Naive thymus-derived CD8-positive, alpha-beta T cell (primary cell): ENCODE measurements at regions of chr11 and their contacts with region 1.

Region 1: GRCh38 chr11:130002846-130003716 is 446 bp upstream of the PRDM10 start:
- DNase-seq: peak in 9 of 10 donors; percentile 74 to 97 (median 90)
- ATAC-seq: peak; percentile 75 to 81
- H3K4me3 Mint-ChIP-seq: peak overlapping the region; percentile 94 to 100 (median 99)
- H3K27ac Mint-ChIP-seq: peak overlapping the region; percentile 99 to 100 (median 100)
- H3K4me1 Mint-ChIP-seq: peaks cover 11 to 49% (median 36%) of the 10 kb centered on the region in 4 donors
- H3K27me3 Mint-ChIP-seq: peaks cover 0 to 2% (median 0%) of the 10 kb centered on the region in 5 donors

Region 2: DNA sequence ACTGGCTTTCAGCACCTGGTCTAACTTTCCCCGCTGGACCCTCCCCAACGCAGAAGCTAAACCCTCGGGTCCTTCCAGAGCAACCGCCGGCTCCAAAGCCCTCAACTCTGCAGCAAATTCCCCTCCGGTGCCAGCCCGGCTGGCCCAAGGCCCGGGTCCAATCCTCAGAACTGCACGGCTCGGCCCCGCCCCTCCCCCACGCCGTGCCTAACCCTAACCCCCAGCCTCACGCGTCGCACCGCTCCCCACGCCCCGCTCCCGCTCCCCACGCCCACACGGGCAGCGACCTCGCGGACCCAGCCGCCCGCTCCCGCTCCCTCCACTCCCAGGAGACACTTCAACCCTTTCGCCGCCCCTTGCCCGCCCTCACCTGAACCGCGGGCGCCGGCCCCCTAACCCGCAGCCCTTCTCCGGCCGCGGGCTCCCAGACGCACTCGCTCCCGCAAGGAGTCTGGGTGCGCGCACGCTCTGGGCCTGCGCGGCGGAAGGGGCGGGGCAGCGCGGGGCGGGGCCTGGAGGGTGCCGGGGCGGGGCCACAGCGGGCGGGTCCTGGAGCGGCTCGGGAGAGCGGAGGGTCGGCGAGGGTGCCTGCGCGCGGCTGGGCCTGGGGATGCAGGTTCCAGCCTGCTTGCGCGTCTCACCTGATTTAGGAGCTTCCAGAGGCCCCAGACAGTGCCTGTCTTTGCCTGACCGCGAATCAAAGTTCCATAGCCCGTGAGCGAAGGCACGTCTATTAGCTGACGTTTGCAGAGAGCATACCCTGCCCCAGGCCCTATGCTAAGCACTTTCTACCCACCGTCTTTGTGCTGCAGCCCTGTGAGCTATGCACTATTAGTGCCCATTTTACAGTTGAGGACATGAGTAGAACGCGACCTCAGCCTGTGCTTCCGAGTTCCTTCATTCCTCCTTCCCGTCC is 107.7 kb before region 1 on chr11 and contains the start of gene NFRKB:
- POLR2A ChIA-PET with region 1: interaction called, 18 read pairs
- DNase-seq: peak; percentile 67 to 92 (median 87)
- ATAC-seq: peak; percentile 93 to 94
- H3K4me3 Mint-ChIP-seq: peak within 1 kb of the TSS; percentile 82 to 94 (median 92)
- H3K27ac Mint-ChIP-seq: peak within 1 kb of the TSS; percentile 76 to 94 (median 90)
- H3K4me1 Mint-ChIP-seq: peaks cover 24 to 43% (median 38%) of the 10 kb centered on the region in 4 donors
- H3K27me3 Mint-ChIP-seq: no peaks in the 10 kb centered on the region
- polyA plus RNA-seq, gene NFRKB: 16.9 to 21.9 (median 17.6) TPM

Region 3: GRCh38 chr11:129992161-129992944 is 10.7 kb before region 1 on chr11:
- POLR2A ChIA-PET with region 1: interaction called, 22 read pairs
- DNase-seq: peak in 9 of 10 donors; percentile 15 to 71 (median 33)
- ATAC-seq: peak; percentile 83
- H3K4me3 Mint-ChIP-seq: no peak overlapping the region
- H3K27ac Mint-ChIP-seq: peak overlapping the region in 2 of 10 donors; percentile 34 to 47
- H3K4me1 Mint-ChIP-seq: peaks cover 10 to 33% (median 13%) of the 10 kb centered on the region in 4 donors
- H3K27me3 Mint-ChIP-seq: no peaks in the 10 kb centered on the region

Region 4: GRCh38 chr11:130069684-130070108 is 66.6 kb after region 1 on chr11 and contains the start of gene APLP2:
- POLR2A ChIA-PET with region 1: interaction called, 62 read pairs
- DNase-seq: peak; percentile 94 to 99 (median 96)
- ATAC-seq: peak; percentile 86 to 89
- H3K4me3 Mint-ChIP-seq: peak within 1 kb of the TSS; percentile 92 to 99 (median 97)
- H3K27ac Mint-ChIP-seq: peak within 1 kb of the TSS; percentile 93 to 99 (median 95)
- H3K4me1 Mint-ChIP-seq: peaks cover 12 to 37% (median 20%) of the 10 kb centered on the region in 4 donors
- H3K27me3 Mint-ChIP-seq: peaks cover 0 to 15% (median 4%) of the 10 kb centered on the region in 5 donors
- polyA plus RNA-seq, gene APLP2: 26.2 to 35.1 (median 26.8) TPM

Region 5: DNA sequence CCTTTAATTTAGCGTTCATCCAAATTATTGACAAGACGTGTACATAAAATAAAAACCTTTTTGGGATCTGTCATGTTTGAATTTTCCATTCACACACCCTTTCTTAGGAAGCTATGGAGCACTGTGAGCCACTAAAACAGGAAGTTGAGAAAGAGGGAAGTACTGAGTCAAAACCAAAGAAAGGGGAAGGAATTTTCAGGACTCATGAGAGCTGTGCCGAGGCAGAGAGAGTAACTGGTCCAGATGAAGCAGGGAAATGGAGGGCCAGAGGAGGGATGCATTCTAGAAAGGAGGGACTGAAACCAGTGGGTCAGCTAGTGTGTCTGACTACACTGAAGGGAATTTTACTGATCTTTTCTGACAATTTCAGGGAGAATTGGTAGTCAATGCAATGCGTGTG is 91.5 kb after region 1 on chr11:
- POLR2A ChIA-PET with region 1: no interaction called
- DNase-seq: no peak
- ATAC-seq: no peak
- H3K4me3 Mint-ChIP-seq: no peak overlapping the region
- H3K27ac Mint-ChIP-seq: peak overlapping the region in 2 of 10 donors; percentile 2 to 57
- H3K4me1 Mint-ChIP-seq: peaks cover 0 to 42% (median 4%) of the 10 kb centered on the region in 4 donors
- H3K27me3 Mint-ChIP-seq: no peaks in the 10 kb centered on the region